ENCODE measurements at regions of chr5 and their contacts with region 1.

Region 1: GRCh38 chr5:141960449-141961202 is 2.6 kb upstream of the PCDH12 start:
- DNase-seq: peak; percentile 90
- H3K4me3 ChIP-seq: no peak overlapping the region
- H3K27ac ChIP-seq: no peak overlapping the region
- H3K4me1 ChIP-seq: peaks cover 6% of the 10 kb centered on the region
- H3K27me3 ChIP-seq: no peaks in the 10 kb centered on the region
- CTCF ChIP-seq: peak; percentile 81 to 90 (median 88)
- POLR2A ChIP-seq: no peak

Region 2: DNA sequence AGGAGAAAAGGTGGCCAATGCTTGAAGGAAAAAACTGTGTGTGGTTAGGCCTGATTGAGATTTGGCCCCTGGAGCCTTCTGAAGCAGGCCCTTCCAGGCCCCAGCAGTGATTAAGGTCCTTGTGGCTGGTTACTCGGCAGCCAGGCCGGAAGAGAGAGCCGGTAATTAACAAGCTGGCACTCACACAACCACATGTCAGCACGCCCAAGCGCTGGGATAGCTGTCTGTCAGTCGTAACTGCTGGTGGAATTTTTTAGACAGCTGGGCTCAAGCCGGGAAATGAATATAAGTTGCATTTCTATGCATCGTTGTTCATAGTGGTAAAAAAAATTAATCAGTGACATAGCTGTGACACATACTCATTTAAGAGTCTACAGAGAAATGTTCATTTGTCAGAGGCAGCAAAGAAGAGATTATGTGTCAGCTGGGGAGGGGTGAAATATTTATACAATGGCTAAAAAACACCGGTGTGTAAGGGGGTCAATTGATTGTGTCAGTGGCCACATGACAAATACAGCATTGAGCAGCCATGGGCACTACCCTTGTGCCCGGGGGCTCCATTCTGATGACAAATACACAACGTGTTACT is 264.9 kb before region 1 on chr5:
- intact Hi-C with region 1: loop called (anchors 5 kb)
- DNase-seq: no peak
- H3K4me3 ChIP-seq: no peak overlapping the region
- H3K27ac ChIP-seq: no peak overlapping the region
- H3K4me1 ChIP-seq: no peaks in the 10 kb centered on the region
- H3K27me3 ChIP-seq: no peaks in the 10 kb centered on the region
- CTCF ChIP-seq: no peak
- POLR2A ChIP-seq: no peak

Region 3: DNA sequence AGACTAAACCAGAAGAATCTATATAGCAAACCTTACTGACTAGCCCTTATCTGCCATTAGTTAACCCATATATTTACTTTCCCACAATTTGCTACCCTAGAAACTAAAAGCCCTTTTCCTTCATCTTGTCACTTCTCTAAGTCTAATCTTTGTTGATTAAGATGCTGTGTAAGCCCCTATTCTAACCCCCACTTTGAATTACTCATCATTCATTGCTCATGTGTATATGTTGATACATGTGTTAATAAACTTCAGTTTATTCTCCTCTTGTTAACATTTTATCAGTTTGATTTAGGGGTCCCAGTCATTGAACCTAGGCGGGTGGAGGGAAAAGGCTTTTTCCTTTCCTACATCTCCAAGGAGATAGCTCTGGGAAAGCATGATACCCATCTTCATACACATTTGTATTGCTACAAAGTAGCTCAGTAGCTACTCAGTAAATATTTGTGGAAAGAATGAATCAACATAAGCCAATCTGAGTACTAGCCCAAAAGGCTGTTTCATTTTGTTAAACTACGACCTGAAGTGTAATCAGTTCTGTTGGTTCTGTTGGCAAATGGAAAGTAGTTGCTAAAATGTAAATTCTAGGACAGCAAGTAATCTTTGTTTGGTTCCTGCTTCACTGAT is 112.8 kb after region 1 on chr5:
- intact Hi-C with region 1: no loop called
- DNase-seq: no peak
- H3K4me3 ChIP-seq: no peak overlapping the region
- H3K27ac ChIP-seq: no peak overlapping the region
- H3K4me1 ChIP-seq: no peaks in the 10 kb centered on the region
- H3K27me3 ChIP-seq: no peaks in the 10 kb centered on the region
- CTCF ChIP-seq: no peak
- POLR2A ChIP-seq: no peak

Measured in testis (tissue), 5 donors.